ENCODE measurements at regions of chr1 and their contacts with region 1.

Region 1: GRCh38 chr1:228464487-228464983 is 22.6 kb upstream of the RNF187 start:
- DNase-seq: peak; percentile 97
- ATAC-seq: peak; percentile 77
- H3K4me3 Mint-ChIP-seq: peak overlapping the region; percentile 94
- H3K27ac Mint-ChIP-seq: peak overlapping the region; percentile 96
- H3K4me1 Mint-ChIP-seq: peaks cover 74% of the 10 kb centered on the region
- H3K27me3 Mint-ChIP-seq: no peaks in the 10 kb centered on the region

Region 2: GRCh38 chr1:228445843-228446650 is 18.5 kb before region 1 on chr1:
- CTCF ChIA-PET with region 1: no interaction called
- DNase-seq: peak; percentile 72
- ATAC-seq: peak; percentile 84
- H3K4me3 Mint-ChIP-seq: peak overlapping the region; percentile 71
- H3K27ac Mint-ChIP-seq: peak overlapping the region; percentile 49
- H3K4me1 Mint-ChIP-seq: peaks cover 27% of the 10 kb centered on the region
- H3K27me3 Mint-ChIP-seq: peaks cover 49% of the 10 kb centered on the region

Region 3: DNA sequence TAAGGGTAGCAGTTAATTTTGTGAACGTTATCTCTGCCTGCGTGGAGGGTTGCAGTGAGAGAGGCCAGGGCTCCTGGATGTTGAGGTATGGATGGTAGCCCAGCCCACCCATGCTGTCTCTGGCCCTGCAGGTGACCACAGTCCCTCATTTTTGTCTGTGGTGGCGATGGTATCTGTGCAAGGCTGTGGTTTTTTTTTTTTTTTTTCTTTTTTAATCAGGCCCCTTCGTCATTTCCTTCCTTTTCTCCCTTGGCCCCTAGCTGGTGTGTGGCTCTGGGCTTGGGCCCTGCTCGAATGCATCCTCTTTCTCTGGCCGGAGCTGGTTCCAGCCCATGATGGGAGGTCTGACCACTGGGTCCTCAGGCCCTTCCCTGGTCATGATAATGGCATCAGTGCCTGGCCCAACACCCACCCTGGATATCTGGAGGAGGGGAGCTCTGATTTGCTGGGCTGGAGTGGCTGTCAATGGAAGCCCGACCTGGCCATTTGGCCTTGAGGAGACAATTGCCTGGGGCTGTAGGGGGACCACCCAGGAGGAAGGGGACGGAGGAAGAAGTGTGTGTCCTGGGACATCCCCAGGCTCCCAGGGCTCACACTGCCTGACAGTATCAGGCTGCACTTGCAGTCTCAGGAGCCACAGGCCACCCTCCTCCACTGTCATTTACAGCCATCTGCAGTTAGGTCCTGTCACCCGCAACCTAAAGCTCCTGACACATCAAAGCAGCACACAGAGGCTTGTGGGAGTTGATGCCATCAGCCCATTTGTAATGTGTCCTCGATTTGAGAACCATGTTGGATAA is 14.6 kb after region 1 on chr1:
- CTCF ChIA-PET with region 1: interaction called, 69 read pairs
- DNase-seq: peak; percentile 82
- ATAC-seq: peak; percentile 85
- H3K4me3 Mint-ChIP-seq: peak overlapping the region; percentile 66
- H3K27ac Mint-ChIP-seq: peak overlapping the region; percentile 98
- H3K4me1 Mint-ChIP-seq: peaks cover 75% of the 10 kb centered on the region
- H3K27me3 Mint-ChIP-seq: no peaks in the 10 kb centered on the region

Region 4: DNA sequence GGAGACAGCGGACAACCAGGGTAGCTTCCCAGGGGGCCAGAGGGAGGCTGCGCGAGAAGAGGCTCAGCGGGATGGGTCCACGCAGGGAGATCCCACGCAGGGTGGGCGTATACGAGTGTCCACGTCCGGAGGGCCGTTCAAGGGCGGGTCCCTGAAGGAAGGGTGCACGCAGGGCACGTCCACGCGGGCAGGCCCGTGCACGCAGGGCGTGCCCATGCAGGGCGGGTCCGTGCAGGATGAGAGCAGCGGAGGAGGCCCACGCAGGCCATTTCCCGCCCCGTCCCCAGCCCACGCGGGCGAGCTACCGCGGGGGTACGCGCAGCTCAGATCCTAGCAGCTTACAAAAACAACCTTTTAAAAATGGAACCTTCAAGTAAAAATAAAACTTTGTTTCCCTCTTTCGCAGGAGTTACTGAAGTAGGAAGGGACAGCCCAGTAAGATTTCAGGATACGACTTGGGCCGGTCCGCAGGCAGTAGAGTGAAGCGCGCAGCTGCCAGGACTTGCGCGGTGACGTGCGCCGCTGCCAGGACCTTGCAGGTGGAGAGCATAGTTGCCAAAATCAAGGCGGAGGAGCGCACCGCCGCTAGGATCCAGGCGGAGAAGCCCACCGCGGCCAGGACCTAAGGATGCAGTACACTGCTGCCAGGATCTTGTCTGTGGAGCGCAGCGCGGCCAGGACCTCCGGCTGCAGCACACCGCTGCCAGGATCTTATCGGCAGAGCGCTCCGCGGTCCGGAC is 22.2 kb after region 1 on chr1:
- CTCF ChIA-PET with region 1: interaction called, 26 read pairs
- DNase-seq: peak; percentile 89
- ATAC-seq: peak; percentile 70
- H3K4me3 Mint-ChIP-seq: peak overlapping the region; percentile 97
- H3K27ac Mint-ChIP-seq: peak overlapping the region; percentile 98
- H3K4me1 Mint-ChIP-seq: peaks cover 64% of the 10 kb centered on the region
- H3K27me3 Mint-ChIP-seq: no peaks in the 10 kb centered on the region

Region 5: GRCh38 chr1:228541725-228542124 is 77.2 kb after region 1 on chr1:
- CTCF ChIA-PET with region 1: no interaction called
- DNase-seq: no peak
- ATAC-seq: no peak
- H3K4me3 Mint-ChIP-seq: no peak overlapping the region
- H3K27ac Mint-ChIP-seq: no peak overlapping the region
- H3K4me1 Mint-ChIP-seq: no peaks in the 10 kb centered on the region
- H3K27me3 Mint-ChIP-seq: no peaks in the 10 kb centered on the region

Measured in activated CD8-positive, alpha-beta memory T cell treated with anti-CD3 and anti-CD28 coated beads, Interleukin-2, amount 10 ng/mL, durations not matched to agents 7 days and 5 days (primary cell).